ENCODE measurements at regions of chr7 and their contacts with region 1.

Region 1: GRCh38 chr7:74289659-74290514 is 680 bp downstream of the CLIP2 start:
- DNase-seq: no peak
- H3K4me3 ChIP-seq: peak overlapping the region; percentile 83 to 92
- H3K27ac ChIP-seq: peak overlapping the region; percentile 89
- H3K4me1 ChIP-seq: peaks cover 52% of the 10 kb centered on the region
- H3K27me3 ChIP-seq: no peaks in the 10 kb centered on the region
- CTCF ChIP-seq: no peak
- POLR2A ChIP-seq: peak in 1 of 2 donors; percentile 8

Region 2: DNA sequence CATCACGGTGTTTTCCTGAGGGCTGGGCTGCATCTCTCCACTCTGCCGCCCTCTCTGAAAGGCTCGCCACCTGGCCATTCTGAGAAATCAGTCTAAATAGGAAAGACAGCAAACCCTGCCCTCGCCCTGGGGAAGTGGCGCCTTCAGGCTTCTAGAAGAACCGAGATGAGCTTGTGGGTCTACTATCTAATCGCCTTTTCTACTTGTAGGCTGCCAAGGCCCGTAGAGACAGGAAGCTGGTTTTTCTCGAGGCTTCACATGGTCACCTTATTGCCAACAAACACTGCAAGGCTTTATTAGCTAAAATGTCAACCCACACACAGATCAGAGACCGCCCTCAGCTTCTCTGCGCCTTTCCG is 58.7 kb before region 1 on chr7:
- intact Hi-C with region 1: no loop called
- DNase-seq: no peak
- H3K4me3 ChIP-seq: no peak overlapping the region
- H3K27ac ChIP-seq: no peak overlapping the region
- H3K4me1 ChIP-seq: peaks cover 2% of the 10 kb centered on the region
- H3K27me3 ChIP-seq: no peaks in the 10 kb centered on the region
- CTCF ChIP-seq: no peak
- POLR2A ChIP-seq: no peak

Region 3: GRCh38 chr7:74256491-74257408 is 33.1 kb before region 1 on chr7:
- intact Hi-C with region 1: loop called (anchors 5 kb)
- DNase-seq: no peak
- H3K4me3 ChIP-seq: no peak overlapping the region
- H3K27ac ChIP-seq: no peak overlapping the region
- H3K4me1 ChIP-seq: peaks cover 26% of the 10 kb centered on the region
- H3K27me3 ChIP-seq: no peaks in the 10 kb centered on the region
- CTCF ChIP-seq: no peak
- POLR2A ChIP-seq: no peak

Region 4: DNA sequence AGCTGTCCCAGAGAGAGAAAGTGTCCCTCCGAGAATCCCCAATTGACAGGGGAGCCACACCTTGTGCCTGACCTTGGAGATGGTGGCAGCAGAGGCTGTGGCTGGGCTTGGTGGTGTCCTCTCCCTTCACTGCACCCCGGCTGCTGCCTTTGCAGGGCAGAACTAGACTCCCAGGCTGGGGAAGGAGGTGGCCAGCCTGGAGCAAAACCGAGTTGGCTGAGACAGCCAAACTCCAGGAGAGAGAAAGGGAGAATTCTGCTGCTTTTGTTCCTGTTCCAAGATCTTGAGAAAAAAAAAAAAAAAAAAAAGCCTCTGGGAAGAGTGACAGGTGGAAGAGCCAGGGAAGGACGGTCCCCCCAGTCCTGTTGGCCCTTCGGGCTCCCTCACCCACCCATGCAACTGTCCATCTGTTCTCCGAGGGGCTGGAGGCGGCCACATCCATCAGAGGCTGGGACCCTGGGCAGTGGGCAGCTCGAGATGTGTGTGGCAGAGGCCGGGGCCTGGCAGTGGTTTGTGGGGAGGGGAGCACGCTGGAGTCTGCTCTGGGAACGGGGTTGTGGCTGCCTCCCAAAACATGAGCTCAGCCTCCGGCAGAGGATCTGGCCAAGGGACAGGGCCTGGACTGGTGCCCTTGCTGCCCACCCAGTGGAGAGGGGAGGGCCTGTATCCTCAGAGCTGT is 34.8 kb after region 1 on chr7:
- intact Hi-C with region 1: loop called (anchors 1 kb)
- DNase-seq: no peak
- H3K4me3 ChIP-seq: no peak overlapping the region
- H3K27ac ChIP-seq: no peak overlapping the region
- H3K4me1 ChIP-seq: peaks cover 16% of the 10 kb centered on the region
- H3K27me3 ChIP-seq: no peaks in the 10 kb centered on the region
- CTCF ChIP-seq: no peak
- POLR2A ChIP-seq: no peak

Measured in vagina (tissue), 2 donors.